Esophagus muscularis mucosa (tissue), 4 donors: ENCODE measurements at regions of chr15 and their contacts with region 1.

Region 1: GRCh38 chr15:88834211-88834812 is 31.1 kb downstream of the ACAN start:
- DNase-seq: no peak
- H3K4me3 ChIP-seq: no peak overlapping the region
- H3K27ac ChIP-seq: no peak overlapping the region
- H3K4me1 ChIP-seq: peaks cover 0 to 6% (median 0%) of the 10 kb centered on the region in 4 donors
- H3K27me3 ChIP-seq: no peaks in the 10 kb centered on the region
- CTCF ChIP-seq: peak; percentile 49 to 54 (median 49)
- EP300 ChIP-seq: no peak
- POLR2A ChIP-seq: no peak

Region 2: DNA sequence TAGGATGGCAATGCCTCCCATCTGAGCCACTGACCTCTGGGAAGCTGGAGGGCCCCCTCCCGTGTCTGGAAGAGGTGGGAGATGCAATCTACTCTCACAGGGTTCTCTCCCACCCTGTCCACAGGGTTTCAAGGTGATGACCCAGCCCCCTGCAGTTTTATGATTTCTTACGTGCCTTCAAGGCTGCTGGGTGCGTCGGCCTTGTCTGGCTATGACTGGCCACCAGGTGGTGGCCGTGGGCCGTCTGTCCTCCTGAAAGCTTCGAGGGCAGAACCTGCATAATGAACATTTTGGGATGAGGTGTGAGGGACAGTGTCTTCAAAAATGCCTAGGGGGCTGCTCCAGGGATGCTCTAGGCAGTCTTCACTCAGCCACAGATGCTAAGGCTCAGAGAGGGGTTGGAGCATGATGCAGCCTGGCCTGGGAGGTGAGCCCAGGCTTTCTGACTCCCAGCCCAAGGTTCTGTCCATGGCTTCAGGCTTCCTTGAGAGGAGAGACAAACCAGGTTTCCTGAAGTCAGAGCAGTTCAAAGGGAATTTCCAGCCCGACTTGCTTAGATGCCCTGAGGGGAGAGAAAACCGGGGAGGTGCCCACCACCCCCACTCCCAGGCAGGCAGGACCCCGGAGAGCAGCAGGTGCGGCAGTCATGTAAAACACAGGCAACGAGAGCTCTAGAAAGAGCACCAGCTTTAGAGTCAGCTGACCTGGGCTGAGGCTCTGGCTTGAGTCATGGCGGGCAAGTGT is 176.8 kb before region 1 on chr15:
- intact Hi-C with region 1: loop called (anchors 5 kb)
- DNase-seq: peak; percentile 92
- H3K4me3 ChIP-seq: no peak overlapping the region
- H3K27ac ChIP-seq: no peak overlapping the region
- H3K4me1 ChIP-seq: peaks cover 4 to 11% (median 8%) of the 10 kb centered on the region in 4 donors
- H3K27me3 ChIP-seq: peaks cover 0 to 11% (median 0%) of the 10 kb centered on the region in 4 donors
- CTCF ChIP-seq: peak; percentile 54 to 75 (median 65)
- EP300 ChIP-seq: no peak
- POLR2A ChIP-seq: no peak

Region 3: DNA sequence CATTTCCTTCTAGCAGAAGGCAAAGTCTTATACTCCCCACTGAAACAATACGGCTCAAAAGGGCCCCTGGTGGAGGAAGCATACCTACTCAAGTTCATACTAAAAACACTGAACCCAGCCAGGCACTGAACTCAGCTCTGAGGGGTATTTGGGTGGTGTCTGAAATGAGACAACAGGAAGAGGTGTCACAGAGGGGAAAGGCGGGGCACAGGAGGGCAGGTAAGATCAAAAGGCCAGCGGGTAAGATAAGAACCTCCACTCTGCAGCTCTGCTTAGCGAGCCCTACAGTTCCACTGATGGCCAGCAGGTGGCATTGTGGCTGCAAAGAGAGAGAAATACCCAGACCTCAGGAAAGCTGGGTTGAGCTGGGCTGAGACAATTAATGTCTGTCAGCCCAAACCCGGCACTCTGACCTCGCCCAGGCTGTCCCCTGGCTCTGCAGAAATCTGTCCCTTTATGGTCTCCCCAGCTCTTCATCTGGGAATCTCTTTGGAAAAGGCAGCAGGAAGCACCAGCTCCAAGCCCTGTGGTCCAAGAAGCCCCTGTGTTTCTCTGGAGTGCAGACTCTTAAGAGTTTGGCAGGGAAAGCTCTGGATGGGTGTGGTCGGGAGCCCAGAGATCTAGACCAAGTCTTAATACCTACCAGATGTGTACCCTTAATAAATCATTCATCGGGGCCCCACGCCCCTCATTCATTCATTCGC is 70.5 kb after region 1 on chr15:
- intact Hi-C with region 1: no loop called
- DNase-seq: no peak
- H3K4me3 ChIP-seq: no peak overlapping the region
- H3K27ac ChIP-seq: peak overlapping the region in 3 of 4 donors; percentile 29 to 55 (median 36)
- H3K4me1 ChIP-seq: peaks cover 39 to 63% (median 55%) of the 10 kb centered on the region in 4 donors
- H3K27me3 ChIP-seq: no peaks in the 10 kb centered on the region
- CTCF ChIP-seq: peak in 2 of 3 experiments; percentile 98 to 99
- EP300 ChIP-seq: no peak
- POLR2A ChIP-seq: no peak

Region 4: DNA sequence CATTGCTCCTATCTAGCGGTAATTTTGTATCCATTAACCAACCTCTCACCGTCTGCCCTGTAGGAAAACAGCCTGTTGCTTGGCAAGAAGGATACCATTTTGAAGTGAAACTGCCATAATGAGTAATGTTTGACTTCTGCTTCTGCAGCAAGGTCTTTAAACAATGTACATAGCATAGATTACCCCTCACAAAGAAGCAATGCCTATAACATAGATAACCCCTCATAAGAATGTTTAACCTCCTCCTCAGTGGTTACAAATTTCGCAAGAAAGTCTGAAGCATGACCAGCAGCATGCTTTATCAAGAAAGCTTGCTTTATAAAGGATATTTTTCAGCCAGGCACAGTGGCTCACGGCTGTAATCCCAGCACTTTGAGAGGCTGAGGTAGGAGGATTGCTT is 140.1 kb after region 1 on chr15:
- intact Hi-C with region 1: no loop called
- DNase-seq: no peak
- H3K4me3 ChIP-seq: no peak overlapping the region
- H3K27ac ChIP-seq: no peak overlapping the region
- H3K4me1 ChIP-seq: no peaks in the 10 kb centered on the region
- H3K27me3 ChIP-seq: no peaks in the 10 kb centered on the region
- CTCF ChIP-seq: no peak
- EP300 ChIP-seq: no peak
- POLR2A ChIP-seq: no peak